Activated B cell treated with CpG ODN at 0.5 μM for 24 hours (primary cell): ENCODE measurements at regions of chr17 and their contacts with region 1.

Region 1: GRCh38 chr17:57552114-57552624 is 192.9 kb downstream of the CCDC182 start:
- DNase-seq: peak; percentile 46
- ATAC-seq: peak; percentile 56
- H3K4me3 Mint-ChIP-seq: peak overlapping the region; percentile 76
- H3K27ac Mint-ChIP-seq: peak overlapping the region; percentile 87
- H3K4me1 Mint-ChIP-seq: peaks cover 99% of the 10 kb centered on the region
- H3K27me3 Mint-ChIP-seq: no peaks in the 10 kb centered on the region
- CTCF ChIP-seq: no peak

Region 2: DNA sequence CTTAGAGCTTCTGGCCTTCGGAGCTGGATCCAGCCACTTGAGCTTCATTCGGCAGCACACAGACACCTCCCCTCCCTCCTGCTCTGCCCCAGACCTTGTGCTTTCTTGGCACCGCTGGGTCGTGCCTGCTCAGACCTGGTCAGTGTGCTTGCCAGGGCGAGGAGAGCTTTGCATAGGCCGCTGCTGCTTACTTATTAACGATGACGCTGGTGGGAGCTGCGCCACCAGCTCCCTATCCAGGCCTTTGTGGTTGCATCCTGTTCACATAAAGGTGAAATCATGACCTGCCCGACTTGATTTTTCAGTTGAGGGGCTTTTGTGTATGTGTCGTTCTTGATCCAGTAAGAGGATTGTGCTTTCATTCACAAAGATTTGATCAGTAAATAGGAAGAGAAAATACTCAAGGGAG is 194.8 kb before region 1 on chr17:
- CTCF ChIA-PET with region 1: interaction called, 3 read pairs
- POLR2A ChIA-PET with region 1: no interaction called
- intact Hi-C with region 1: loop called (anchors 5 kb)
- DNase-seq: no peak
- ATAC-seq: peak; percentile 43
- H3K4me3 Mint-ChIP-seq: peak overlapping the region; percentile 74
- H3K27ac Mint-ChIP-seq: peak overlapping the region; percentile 79
- H3K4me1 Mint-ChIP-seq: peaks cover 57% of the 10 kb centered on the region
- H3K27me3 Mint-ChIP-seq: no peaks in the 10 kb centered on the region
- CTCF ChIP-seq: no peak

Region 3: DNA sequence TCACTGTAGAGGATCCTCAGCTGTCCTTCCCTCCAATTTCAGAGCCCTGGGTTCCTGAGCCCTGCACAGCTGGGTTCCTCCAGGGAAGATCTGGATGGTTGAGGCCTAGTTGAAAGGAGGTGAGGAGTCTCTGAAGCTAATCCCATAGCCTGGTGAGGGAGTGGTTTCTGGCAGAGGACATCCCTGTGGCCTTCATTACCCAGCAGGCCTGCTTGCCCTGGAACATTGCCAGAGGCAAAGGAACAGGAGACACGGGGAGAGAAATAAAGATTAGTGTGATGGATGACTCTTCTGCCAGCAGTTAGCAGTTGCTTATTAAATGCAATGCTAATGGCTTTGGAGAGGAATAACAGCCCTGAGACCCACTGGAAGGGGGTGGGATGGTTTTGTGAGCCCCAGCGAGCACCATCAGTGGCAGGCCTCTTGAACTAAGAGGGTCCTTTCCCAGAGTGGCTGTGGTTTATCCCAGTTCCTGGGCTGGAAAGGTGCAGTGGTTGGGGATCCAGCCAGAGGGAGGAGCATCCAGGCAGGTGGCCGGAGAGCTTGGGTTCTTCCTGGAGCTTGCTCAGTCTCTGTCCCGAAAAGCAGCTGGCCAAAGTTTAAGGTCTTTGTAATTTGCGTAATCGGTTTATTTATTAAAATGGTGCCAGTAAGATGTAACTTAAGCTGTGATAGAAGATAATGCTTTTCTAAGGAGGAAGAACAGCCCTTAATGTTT is 16.8 kb before region 1 on chr17:
- CTCF ChIA-PET with region 1: interaction called, 3 read pairs
- POLR2A ChIA-PET with region 1: interaction called, 13 read pairs
- intact Hi-C with region 1: no loop called
- DNase-seq: no peak
- ATAC-seq: no peak
- H3K4me3 Mint-ChIP-seq: no peak overlapping the region
- H3K27ac Mint-ChIP-seq: no peak overlapping the region
- H3K4me1 Mint-ChIP-seq: peaks cover 41% of the 10 kb centered on the region
- H3K27me3 Mint-ChIP-seq: no peaks in the 10 kb centered on the region
- CTCF ChIP-seq: no peak

Region 4: DNA sequence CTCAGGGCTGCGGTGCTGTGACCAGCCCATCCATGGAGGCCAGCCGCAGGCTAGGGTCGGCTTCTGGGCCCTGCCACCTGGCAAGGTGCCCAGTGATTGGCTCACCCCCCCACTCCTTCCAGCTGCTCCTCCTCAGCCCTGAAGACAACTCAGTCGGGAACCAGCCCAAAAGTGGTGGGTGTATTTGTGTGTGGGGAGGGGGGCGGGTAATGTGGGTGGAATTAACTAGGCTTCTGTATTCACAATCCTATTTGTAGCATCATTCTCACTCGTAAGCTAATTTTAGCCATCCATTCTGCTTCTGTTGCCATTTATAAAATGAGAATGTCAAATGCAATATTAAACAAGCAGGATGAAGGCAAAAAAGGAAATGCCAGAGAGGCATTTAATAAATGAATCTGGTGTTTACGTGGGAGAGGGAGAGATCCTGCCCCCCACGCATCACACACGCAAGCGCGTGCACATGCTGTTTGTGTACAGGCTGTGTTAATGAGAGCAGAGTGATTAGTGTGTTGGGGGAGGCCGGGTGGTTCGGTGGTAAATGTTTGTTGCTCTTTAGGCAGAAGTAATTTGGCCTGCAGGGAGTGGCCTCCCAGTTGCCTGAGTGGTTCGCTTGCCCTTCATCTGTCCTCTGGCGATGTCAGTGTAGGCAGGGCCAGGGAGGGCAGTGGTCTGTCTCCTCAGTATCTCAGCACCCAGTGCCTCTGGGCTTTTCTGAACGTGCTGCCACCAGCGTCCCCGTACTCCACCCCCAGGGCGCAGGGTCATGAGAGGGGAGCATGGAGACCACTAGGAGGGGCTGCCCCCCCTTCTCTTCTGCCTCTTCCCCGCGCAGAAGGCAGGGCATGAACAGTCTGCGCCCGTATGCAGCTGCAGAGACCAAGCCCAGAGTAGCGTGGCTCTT is 52.9 kb after region 1 on chr17:
- CTCF ChIA-PET with region 1: interaction called, 17 read pairs
- POLR2A ChIA-PET with region 1: interaction called, 34 read pairs
- intact Hi-C with region 1: loop called (anchors 1 kb)
- DNase-seq: peak; percentile 48
- ATAC-seq: peak; percentile 76
- H3K4me3 Mint-ChIP-seq: peak overlapping the region; percentile 72
- H3K27ac Mint-ChIP-seq: peak overlapping the region; percentile 86
- H3K4me1 Mint-ChIP-seq: peaks cover 56% of the 10 kb centered on the region
- H3K27me3 Mint-ChIP-seq: no peaks in the 10 kb centered on the region
- CTCF ChIP-seq: no peak

Region 5: GRCh38 chr17:57629470-57629869 is 77.3 kb after region 1 on chr17:
- CTCF ChIA-PET with region 1: no interaction called
- POLR2A ChIA-PET with region 1: interaction called, 10 read pairs
- intact Hi-C with region 1: loop called (anchors 1 kb)
- DNase-seq: peak; percentile 54
- ATAC-seq: peak; percentile 91
- H3K4me3 Mint-ChIP-seq: peak overlapping the region; percentile 57
- H3K27ac Mint-ChIP-seq: peak overlapping the region; percentile 83
- H3K4me1 Mint-ChIP-seq: peaks cover 66% of the 10 kb centered on the region
- H3K27me3 Mint-ChIP-seq: no peaks in the 10 kb centered on the region
- CTCF ChIP-seq: no peak

Region 6: GRCh38 chr17:57747221-57748017 is 195.2 kb after region 1 on chr17:
- CTCF ChIA-PET with region 1: no interaction called
- POLR2A ChIA-PET with region 1: no interaction called
- intact Hi-C with region 1: loop called (anchors 5 kb)
- DNase-seq: no peak
- ATAC-seq: peak; percentile 74
- H3K4me3 Mint-ChIP-seq: no peak overlapping the region
- H3K27ac Mint-ChIP-seq: no peak overlapping the region
- H3K4me1 Mint-ChIP-seq: peaks cover 17% of the 10 kb centered on the region
- H3K27me3 Mint-ChIP-seq: peaks cover 7% of the 10 kb centered on the region
- CTCF ChIP-seq: no peak